HAP-1 (cell line): ENCODE measurements at regions of chr5 and their contacts with region 1.

Region 1: DNA sequence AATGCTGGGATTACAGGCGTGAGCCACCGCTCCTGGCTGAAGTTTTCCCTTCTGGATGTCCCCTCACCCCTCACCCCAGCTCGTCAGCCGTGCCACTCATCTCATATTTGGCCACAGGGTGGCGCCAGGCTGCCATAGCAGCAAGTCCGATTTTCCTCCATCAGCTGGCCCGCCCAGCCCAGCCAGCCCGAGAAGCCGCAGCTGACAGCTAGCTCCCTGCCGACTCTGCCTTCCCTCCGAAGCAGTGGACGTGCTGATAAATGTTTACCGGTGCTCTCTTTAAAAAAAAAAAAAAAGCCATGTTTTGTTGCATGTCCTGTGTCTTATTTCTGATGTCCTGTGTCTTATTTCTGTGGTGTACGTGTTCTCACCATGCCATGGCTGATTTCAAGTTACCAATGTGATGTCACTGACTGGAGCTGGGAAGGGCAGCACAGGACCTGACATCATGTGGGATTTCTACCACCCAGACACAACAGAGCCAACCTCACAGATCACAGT is 58.3 kb downstream of the PFDN1 start:
- DNase-seq: peak; percentile 75 to 93
- H3K4me3 ChIP-seq: no peak overlapping the region
- H3K4me1 ChIP-seq: peaks cover 7% of the 10 kb centered on the region
- H3K27me3 ChIP-seq: no peaks in the 10 kb centered on the region

Region 2: GRCh38 chr5:140362860-140363630 is 118.5 kb after region 1 on chr5:
- in situ Hi-C with region 1: loop called (anchors 5 kb)
- DNase-seq: peak; percentile 54 to 92
- H3K4me3 ChIP-seq: peak overlapping the region; percentile 15
- H3K4me1 ChIP-seq: no peaks in the 10 kb centered on the region
- H3K27me3 ChIP-seq: no peaks in the 10 kb centered on the region

Region 3: GRCh38 chr5:140725799-140726471 is 481.4 kb after region 1 on chr5:
- in situ Hi-C with region 1: loop called (anchors 10 kb)
- DNase-seq: peak in 1 of 2 experiments; percentile 68
- H3K4me3 ChIP-seq: no peak overlapping the region
- H3K4me1 ChIP-seq: no peaks in the 10 kb centered on the region
- H3K27me3 ChIP-seq: no peaks in the 10 kb centered on the region